ENCODE measurements at regions of chr2 and their contacts with region 1.

Region 1: DNA sequence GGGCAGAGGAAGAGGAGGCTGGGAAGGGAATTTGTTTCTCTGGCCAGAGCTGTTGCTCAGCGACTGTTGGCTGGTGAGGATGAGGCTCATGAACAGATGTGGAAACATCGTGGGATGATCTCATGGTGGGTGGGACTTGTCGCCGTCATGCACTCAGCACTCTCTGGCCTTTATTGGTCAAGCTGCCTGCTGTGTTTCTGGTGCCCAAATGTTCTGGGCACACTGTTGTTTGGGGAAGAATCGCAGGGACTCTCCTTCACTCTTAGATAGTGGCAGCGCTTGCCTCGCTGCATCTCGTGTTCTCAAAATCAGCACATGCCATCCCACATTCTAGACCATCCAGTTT is 145.6 kb downstream of the AGAP1 start:
- DNase-seq: no peak
- H3K4me3 ChIP-seq: no peak overlapping the region
- H3K27ac ChIP-seq: no peak overlapping the region
- H3K4me1 ChIP-seq: peaks cover 5 to 17% (median 12%) of the 10 kb centered on the region in 4 experiments; a peak in 6 of 7 replicates
- H3K27me3 ChIP-seq: no peaks in the 10 kb centered on the region
- CTCF ChIP-seq: no peak
- EP300 ChIP-seq: no peak
- POLR2A ChIP-seq: no peak
- RAD21 ChIP-seq: no peak

Region 2: GRCh38 chr2:235577404-235578330 is 61.7 kb before region 1 on chr2:
- CTCF ChIA-PET with region 1: no interaction called
- POLR2A ChIA-PET with region 1: no interaction called
- DNase-seq: no peak
- H3K4me3 ChIP-seq: no peak overlapping the region
- H3K27ac ChIP-seq: no peak overlapping the region
- H3K4me1 ChIP-seq: peaks cover 2 to 30% (median 11%) of the 10 kb centered on the region in 4 experiments
- H3K27me3 ChIP-seq: no peaks in the 10 kb centered on the region
- CTCF ChIP-seq: no peak
- EP300 ChIP-seq: no peak
- POLR2A ChIP-seq: no peak
- RAD21 ChIP-seq: no peak

Region 3: GRCh38 chr2:235618039-235618438 is 21.4 kb before region 1 on chr2:
- CTCF ChIA-PET with region 1: interaction called, 10 read pairs
- POLR2A ChIA-PET with region 1: no interaction called
- DNase-seq: no peak
- H3K4me3 ChIP-seq: no peak overlapping the region
- H3K27ac ChIP-seq: no peak overlapping the region
- H3K4me1 ChIP-seq: peaks cover 0 to 4% (median under 1%) of the 10 kb centered on the region in 4 experiments; a peak in 4 of 7 replicates
- H3K27me3 ChIP-seq: no peaks in the 10 kb centered on the region
- CTCF ChIP-seq: no peak
- EP300 ChIP-seq: no peak
- POLR2A ChIP-seq: no peak
- RAD21 ChIP-seq: no peak

Region 4: DNA sequence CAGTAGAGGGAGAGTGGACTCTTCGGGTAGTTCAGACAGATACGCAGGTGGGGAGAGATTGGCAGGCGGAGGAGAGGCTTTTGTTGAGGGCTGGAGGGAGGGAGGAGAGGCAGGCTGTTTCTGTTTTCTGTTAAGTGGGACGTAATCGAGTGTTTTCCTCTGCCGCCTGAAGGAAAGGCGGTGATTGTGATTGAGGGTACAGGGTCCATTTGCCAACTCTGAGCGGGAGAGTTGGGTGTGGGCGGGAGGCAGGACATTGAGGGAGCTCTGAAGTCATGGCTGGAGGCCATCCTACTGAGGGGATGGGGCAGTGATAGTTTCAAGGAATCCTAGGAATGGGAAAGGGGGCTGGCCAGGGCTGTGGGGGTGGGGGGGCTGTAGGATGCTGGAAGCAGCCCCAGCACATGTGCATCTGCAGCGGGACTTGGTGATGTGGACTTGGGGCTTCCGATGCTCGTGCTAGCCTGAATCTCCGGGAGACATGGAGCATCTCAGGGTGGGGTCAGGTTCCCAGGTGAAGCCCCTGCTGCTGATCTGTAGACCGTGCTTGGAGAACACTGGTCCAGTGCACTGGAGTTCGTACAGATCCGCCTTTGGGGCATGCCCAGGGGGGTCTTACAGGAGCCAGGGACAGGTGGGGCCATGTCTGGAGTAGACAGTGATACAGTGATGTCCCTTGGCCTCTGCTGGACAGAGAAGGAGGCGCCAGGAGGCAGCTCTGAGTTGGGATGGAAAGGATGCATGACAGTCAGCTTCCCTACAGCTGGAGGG is 22.0 kb after region 1 on chr2:
- CTCF ChIA-PET with region 1: interaction called, 16 read pairs
- POLR2A ChIA-PET with region 1: interaction called, 5 read pairs
- DNase-seq: no peak
- H3K4me3 ChIP-seq: no peak overlapping the region
- H3K27ac ChIP-seq: no peak overlapping the region
- H3K4me1 ChIP-seq: peaks cover 24 to 60% (median 37%) of the 10 kb centered on the region in 4 experiments
- H3K27me3 ChIP-seq: no peaks in the 10 kb centered on the region
- CTCF ChIP-seq: no peak
- EP300 ChIP-seq: no peak
- POLR2A ChIP-seq: no peak
- RAD21 ChIP-seq: no peak

Region 5: GRCh38 chr2:235900631-235901030 is 261.2 kb after region 1 on chr2:
- CTCF ChIA-PET with region 1: no interaction called
- POLR2A ChIA-PET with region 1: no interaction called
- DNase-seq: no peak
- H3K4me3 ChIP-seq: no peak overlapping the region
- H3K27ac ChIP-seq: no peak overlapping the region
- H3K4me1 ChIP-seq: peaks cover 2 to 7% (median 4%) of the 10 kb centered on the region in 4 experiments; a peak in 5 of 7 replicates
- H3K27me3 ChIP-seq: no peaks in the 10 kb centered on the region; a peak in 1 of 7 replicates
- CTCF ChIP-seq: no peak
- EP300 ChIP-seq: no peak
- POLR2A ChIP-seq: no peak
- RAD21 ChIP-seq: no peak

Measured in H1 (cell line).